Natural killer cell (primary cell): ENCODE measurements at regions of chr19 and their contacts with region 1.

Region 1: DNA sequence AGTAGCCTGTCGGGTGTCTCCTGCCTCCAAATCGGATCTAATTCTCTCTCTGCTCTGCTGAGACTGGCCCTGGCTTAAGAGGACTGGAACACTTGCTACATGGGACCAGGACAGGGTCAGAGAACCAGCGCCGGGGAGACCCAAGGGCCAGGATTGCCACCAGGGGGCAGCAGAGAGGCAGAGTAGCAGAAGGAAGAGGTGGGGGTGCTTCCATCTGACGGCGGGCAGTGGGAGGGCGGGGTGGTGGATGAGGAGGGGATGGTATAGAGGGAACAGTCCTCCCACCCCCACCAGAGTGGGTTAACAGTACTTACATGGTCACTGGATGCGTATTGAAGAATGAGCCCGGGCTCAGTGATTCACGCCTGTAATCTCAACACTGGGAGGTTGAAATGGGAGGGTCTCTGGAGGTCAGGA is 11.9 kb downstream of the SELENOW start:
- DNase-seq: peak; percentile 72 to 88
- ATAC-seq: peak; percentile 67 to 86 (median 80)
- H3K4me3 ChIP-seq: no peak overlapping the region
- H3K4me3 Mint-ChIP-seq: no peak overlapping the region
- H3K27ac ChIP-seq: no peak overlapping the region
- H3K27ac Mint-ChIP-seq: no peak overlapping the region
- H3K4me1 ChIP-seq: peaks cover 8% of the 10 kb centered on the region
- H3K4me1 Mint-ChIP-seq: peaks cover 0 to 4% of the 10 kb centered on the region in 2 donors
- H3K27me3 ChIP-seq: no peaks in the 10 kb centered on the region
- H3K27me3 Mint-ChIP-seq: no peaks in the 10 kb centered on the region
- CTCF ChIP-seq: peak; percentile 78

Region 2: DNA sequence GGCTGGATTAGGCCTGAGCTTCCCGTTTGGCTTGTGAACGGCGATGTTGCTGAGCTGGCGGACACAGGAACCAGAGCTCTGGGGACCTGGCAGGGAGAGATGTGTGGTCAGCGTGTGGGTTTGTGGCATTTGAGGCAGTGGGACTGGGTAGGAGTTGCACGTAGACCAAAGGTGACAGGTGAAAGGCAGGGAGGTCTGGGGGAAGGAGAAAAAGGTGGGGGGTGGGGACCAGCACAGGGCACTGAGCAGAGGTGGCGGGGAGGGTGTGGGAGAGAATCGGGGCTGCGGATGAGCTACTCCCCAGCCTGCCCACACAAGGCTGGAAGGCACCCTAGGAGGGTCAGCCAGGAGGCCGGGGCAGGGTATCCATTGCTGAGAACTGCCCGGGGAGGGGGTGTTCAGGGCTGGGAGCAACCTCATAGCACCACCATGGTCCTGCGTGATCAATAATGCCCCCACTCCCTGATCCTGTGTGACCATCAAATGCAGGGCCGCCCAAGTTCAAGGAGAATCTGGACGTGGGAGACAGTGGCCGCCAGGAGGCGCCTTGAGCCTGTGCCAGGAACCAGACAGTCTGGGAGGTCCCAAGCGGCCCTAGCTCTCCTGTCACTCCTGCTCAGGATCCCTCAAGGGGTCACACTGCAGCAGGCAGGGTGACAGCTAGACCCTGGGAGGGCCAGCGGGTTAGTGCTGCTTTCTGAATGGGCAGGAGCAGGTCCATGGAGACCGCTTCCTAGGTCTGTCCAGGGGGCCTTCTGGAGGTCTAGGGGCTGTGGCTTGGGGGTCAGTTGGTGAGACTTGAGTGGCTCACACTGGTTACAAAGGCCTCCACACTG is 24.7 kb before region 1 on chr19:
- intact Hi-C with region 1: loop called (anchors 2 kb)
- DNase-seq: peak in 1 of 2 donors; percentile 69
- ATAC-seq: peak; percentile 46 to 62 (median 58)
- H3K4me3 ChIP-seq: no peak overlapping the region
- H3K4me3 Mint-ChIP-seq: no peak overlapping the region
- H3K27ac ChIP-seq: no peak overlapping the region
- H3K27ac Mint-ChIP-seq: no peak overlapping the region
- H3K4me1 ChIP-seq: no peaks in the 10 kb centered on the region
- H3K4me1 Mint-ChIP-seq: peaks cover 0 to 5% of the 10 kb centered on the region in 2 donors
- H3K27me3 ChIP-seq: no peaks in the 10 kb centered on the region
- H3K27me3 Mint-ChIP-seq: no peaks in the 10 kb centered on the region
- CTCF ChIP-seq: peak; percentile 53